ENCODE measurements at regions of chr13 and their contacts with region 1.

Region 1: GRCh38 chr13:75372517-75372916 is 109.5 kb downstream of the TBC1D4 start:
- DNase-seq: peak; percentile 17
- H3K4me3 ChIP-seq: no peak overlapping the region
- H3K27ac ChIP-seq: no peak overlapping the region
- H3K4me1 ChIP-seq: no peaks in the 10 kb centered on the region
- H3K27me3 ChIP-seq: no peaks in the 10 kb centered on the region
- CTCF ChIP-seq: peak in 3 of 4 experiments; percentile 51 to 65 (median 64)
- POLR2A ChIP-seq: no peak

Region 2: GRCh38 chr13:75258159-75258782 is 114.2 kb before region 1 on chr13:
- intact Hi-C with region 1: no loop called
- DNase-seq: no peak
- H3K4me3 ChIP-seq: no peak overlapping the region
- H3K27ac ChIP-seq: no peak overlapping the region
- H3K4me1 ChIP-seq: no peaks in the 10 kb centered on the region
- H3K27me3 ChIP-seq: no peaks in the 10 kb centered on the region
- CTCF ChIP-seq: peak in 3 of 4 experiments; percentile 37 to 74 (median 65)
- POLR2A ChIP-seq: no peak

Region 3: DNA sequence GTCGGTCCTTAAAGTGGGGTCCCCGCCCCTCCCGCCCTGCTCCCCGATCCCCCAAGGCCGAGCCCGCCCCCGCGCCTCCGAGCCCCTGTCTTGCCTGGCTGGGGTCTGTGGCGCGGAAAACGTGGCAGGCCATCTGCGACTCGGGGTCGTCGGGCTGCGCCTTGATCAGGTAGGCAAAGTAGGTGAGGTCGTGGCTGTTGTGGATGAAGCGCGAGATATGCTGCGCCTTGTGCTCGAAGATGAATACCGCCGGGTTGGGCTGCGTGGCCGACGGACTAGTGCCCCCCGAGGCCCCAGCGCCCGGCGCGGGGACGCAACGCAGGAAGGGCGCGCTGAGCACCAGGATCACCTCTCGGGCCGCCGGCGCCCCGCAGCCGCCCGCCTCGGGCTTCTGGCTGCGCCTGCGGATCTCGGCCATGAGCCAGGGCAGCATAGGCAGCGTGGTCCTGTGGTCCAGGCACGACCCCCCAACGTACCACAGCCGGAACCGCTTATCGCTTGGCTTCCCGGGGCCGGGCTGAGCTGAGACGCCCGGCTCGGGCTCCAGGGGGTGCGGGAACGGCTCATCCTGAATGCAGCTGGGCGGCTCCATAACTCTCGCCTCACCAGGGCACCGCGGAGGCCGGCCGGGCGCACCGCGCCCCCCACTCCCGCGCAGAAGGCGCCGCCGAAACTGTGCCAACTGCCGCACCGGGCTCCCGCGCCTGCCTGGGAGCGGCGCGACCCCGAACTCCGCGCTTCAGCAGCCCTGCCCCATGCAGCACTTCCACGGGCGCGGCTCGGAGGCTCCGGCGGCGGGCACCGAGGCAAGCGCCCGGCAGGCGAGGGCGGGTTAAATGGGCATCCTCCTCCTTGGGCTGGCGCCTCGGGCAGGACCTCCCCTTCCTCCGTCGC is 108.9 kb after region 1 on chr13:
- intact Hi-C with region 1: loop called (anchors 1 kb)
- DNase-seq: peak; percentile 21
- H3K4me3 ChIP-seq: peak overlapping the region; percentile 82 to 88
- H3K27ac ChIP-seq: peak overlapping the region; percentile 79 to 85
- H3K4me1 ChIP-seq: peaks cover 4% of the 10 kb centered on the region
- H3K27me3 ChIP-seq: no peaks in the 10 kb centered on the region
- CTCF ChIP-seq: no peak
- POLR2A ChIP-seq: no peak

Region 4: DNA sequence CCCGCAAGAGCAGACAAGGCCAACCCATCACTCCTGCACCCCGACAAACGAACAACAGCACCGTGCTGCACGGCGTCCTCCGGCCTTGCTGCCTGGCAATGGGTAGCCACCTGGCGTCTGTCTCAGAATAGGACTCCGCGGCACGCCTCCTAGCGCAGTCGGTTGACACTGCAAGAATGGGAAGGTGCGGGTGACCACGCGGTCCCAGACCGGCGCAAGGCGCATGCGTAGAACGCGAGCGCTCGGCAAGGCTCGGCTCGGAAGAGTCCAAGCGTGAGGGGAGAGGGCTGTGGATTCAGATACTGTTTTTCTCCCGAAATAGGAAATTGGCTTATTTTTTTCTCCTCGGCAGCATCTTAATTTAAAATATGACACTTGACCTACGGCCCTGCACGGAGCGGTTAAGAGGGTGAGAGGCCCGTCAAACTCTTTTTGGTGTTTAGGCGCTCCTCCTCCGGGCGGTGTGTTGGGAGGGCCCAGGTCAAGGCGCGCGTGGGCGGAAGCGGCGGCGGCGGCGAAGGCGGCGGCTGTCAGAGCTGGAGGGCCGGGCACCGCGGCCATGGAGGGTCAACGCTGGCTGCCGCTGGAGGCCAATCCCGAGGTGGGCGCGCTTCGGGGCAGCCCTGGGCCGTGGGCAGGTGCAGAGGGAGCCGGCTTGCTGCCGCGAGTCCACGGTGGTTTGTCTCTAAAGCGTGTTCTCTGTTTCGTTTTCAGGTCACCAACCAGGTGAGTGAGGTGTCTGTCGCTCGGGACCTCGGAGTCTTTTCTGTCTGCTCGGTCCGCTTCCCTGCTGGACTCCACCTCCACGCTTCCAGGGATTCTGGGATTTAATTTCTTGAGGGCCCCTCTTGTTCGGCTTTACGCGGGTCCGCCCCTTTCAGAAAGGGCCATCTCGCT is 177.0 kb after region 1 on chr13 and contains the start of gene UCHL3:
- intact Hi-C with region 1: loop called (anchors 5 kb)
- DNase-seq: peak; percentile 92
- H3K4me3 ChIP-seq: peak within 1 kb of the TSS; percentile 67 to 86
- H3K27ac ChIP-seq: peak within 1 kb of the TSS; percentile 78 to 85
- H3K4me1 ChIP-seq: no peaks in the 10 kb centered on the region
- H3K27me3 ChIP-seq: no peaks in the 10 kb centered on the region
- CTCF ChIP-seq: peak; percentile 73 to 96 (median 83)
- POLR2A ChIP-seq: peak; percentile 49
- total RNA-seq, gene UCHL3: 17.1 to 26.8 TPM

Region 5: GRCh38 chr13:76455960-76456359 is 1083.4 kb after region 1 on chr13:
- intact Hi-C with region 1: no loop called
- DNase-seq: no peak
- H3K4me3 ChIP-seq: no peak overlapping the region
- H3K27ac ChIP-seq: no peak overlapping the region
- H3K4me1 ChIP-seq: no peaks in the 10 kb centered on the region
- H3K27me3 ChIP-seq: no peaks in the 10 kb centered on the region
- CTCF ChIP-seq: no peak
- POLR2A ChIP-seq: no peak

Measured in prostate gland (tissue), 2 donors.